Activated B cell treated with CpG ODN at 0.5 μM for 24 hours (primary cell): ENCODE measurements at regions of chr12 and their contacts with region 1.

Region 1: GRCh38 chr12:57390174-57390573 is 40.7 kb downstream of the R3HDM2 start:
- DNase-seq: no peak
- ATAC-seq: no peak
- H3K4me3 Mint-ChIP-seq: no peak overlapping the region
- H3K27ac Mint-ChIP-seq: no peak overlapping the region
- H3K4me1 Mint-ChIP-seq: no peaks in the 10 kb centered on the region
- H3K27me3 Mint-ChIP-seq: no peaks in the 10 kb centered on the region
- CTCF ChIP-seq: no peak

Region 2: GRCh38 chr12:57319678-57320469 is 70.3 kb before region 1 on chr12:
- CTCF ChIA-PET with region 1: no interaction called
- POLR2A ChIA-PET with region 1: no interaction called
- intact Hi-C with region 1: loop called (anchors 10 kb)
- DNase-seq: no peak
- ATAC-seq: no peak
- H3K4me3 Mint-ChIP-seq: no peak overlapping the region
- H3K27ac Mint-ChIP-seq: no peak overlapping the region
- H3K4me1 Mint-ChIP-seq: no peaks in the 10 kb centered on the region
- H3K27me3 Mint-ChIP-seq: no peaks in the 10 kb centered on the region
- CTCF ChIP-seq: no peak

Region 3: GRCh38 chr12:57340104-57340503 is 50.1 kb before region 1 on chr12:
- CTCF ChIA-PET with region 1: no interaction called
- POLR2A ChIA-PET with region 1: no interaction called
- intact Hi-C with region 1: no loop called
- DNase-seq: no peak
- ATAC-seq: no peak
- H3K4me3 Mint-ChIP-seq: no peak overlapping the region
- H3K27ac Mint-ChIP-seq: no peak overlapping the region
- H3K4me1 Mint-ChIP-seq: peaks cover 7% of the 10 kb centered on the region
- H3K27me3 Mint-ChIP-seq: no peaks in the 10 kb centered on the region
- CTCF ChIP-seq: no peak

Region 4: GRCh38 chr12:57744194-57744776 is 354.1 kb after region 1 on chr12:
- CTCF ChIA-PET with region 1: no interaction called
- POLR2A ChIA-PET with region 1: no interaction called
- intact Hi-C with region 1: no loop called
- DNase-seq: peak; percentile 71
- ATAC-seq: peak; percentile 50
- H3K4me3 Mint-ChIP-seq: peak overlapping the region; percentile 86
- H3K27ac Mint-ChIP-seq: peak overlapping the region; percentile 89
- H3K4me1 Mint-ChIP-seq: peaks cover 55% of the 10 kb centered on the region
- H3K27me3 Mint-ChIP-seq: no peaks in the 10 kb centered on the region
- CTCF ChIP-seq: no peak